Activated T-helper 2 cell treated with anti-CD3 and anti-CD28 coated beads, Interferon-gamma antibody, Interleukin-2, Interleukin-4, amounts not matched to agents 10 μg/mL and 5 μg/mL and 100 μg/mL, durations not matched to agents 14 hours and 24 hours and 36 hours (primary cell): ENCODE measurements at regions of chr10 and their contacts with region 1.

Region 1: DNA sequence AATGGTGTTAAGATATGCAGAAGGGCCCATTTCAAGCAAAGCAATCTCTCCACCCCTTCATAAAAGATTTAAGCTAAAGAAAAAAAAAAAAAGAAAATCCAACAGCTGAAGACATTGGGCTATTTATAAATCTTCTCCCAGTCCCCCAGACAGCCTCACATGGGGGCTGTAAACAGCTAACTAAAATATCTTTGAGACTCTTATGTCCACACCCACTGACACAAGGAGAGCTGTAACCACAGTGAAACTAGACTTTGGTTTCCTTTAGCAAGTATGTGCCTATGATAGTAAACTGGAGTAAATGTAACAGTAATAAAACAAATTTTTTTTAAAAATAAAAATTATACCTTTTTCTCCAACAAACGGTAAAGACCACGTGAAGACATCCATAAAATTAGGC is 28.6 kb downstream of the PPP3CB start:
- DNase-seq: no peak
- H3K4me3 Mint-ChIP-seq: no peak overlapping the region
- H3K27ac Mint-ChIP-seq: peak overlapping the region; percentile 28
- H3K4me1 Mint-ChIP-seq: peaks cover 24% of the 10 kb centered on the region
- H3K27me3 Mint-ChIP-seq: no peaks in the 10 kb centered on the region

Region 2: DNA sequence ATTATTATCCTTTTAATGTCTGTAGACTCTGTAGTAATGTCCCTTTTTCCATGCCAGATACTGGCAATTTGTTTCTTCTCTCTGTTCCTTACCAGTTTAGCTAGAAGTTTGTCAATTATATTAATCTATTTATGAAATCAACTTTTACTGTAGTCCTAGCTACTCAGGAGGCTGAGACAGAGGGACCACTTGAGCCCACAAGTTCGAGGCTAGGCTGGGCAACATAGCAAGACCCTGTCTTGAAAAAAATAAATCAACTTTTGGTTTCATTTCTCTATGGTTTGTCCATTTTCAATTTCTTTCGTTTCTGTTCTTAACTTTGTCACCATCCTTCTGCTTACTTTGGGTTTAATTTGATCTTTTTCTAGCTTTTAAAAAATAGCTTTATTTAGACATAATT is 470.1 kb before region 1 on chr10:
- intact Hi-C with region 1: no loop called
- DNase-seq: no peak
- H3K4me3 Mint-ChIP-seq: no peak overlapping the region
- H3K27ac Mint-ChIP-seq: no peak overlapping the region
- H3K4me1 Mint-ChIP-seq: peaks cover 1% of the 10 kb centered on the region
- H3K27me3 Mint-ChIP-seq: no peaks in the 10 kb centered on the region

Region 3: DNA sequence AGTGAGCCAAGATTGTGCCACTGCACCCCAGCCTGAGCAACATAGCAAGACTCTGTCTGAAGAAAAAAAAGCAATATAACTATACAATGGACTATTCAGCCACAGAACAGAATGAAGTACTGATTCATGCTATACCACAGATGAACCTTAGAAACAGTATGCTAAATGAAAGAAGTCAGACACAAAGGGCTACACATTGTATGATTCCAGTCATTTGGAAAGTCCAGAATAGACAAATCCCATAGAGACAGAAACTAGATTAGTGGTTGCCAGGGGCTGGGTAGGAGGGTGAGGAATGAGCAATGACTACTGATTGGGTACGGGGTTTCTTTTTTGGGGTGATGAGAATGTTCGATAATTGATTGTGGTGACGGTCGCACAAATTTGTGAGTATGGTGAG is 99.0 kb before region 1 on chr10:
- intact Hi-C with region 1: no loop called
- DNase-seq: no peak
- H3K4me3 Mint-ChIP-seq: no peak overlapping the region
- H3K27ac Mint-ChIP-seq: no peak overlapping the region
- H3K4me1 Mint-ChIP-seq: peaks cover 6% of the 10 kb centered on the region
- H3K27me3 Mint-ChIP-seq: no peaks in the 10 kb centered on the region

Region 4: GRCh38 chr10:73480158-73480557 is 13.0 kb after region 1 on chr10:
- intact Hi-C with region 1: loop called (anchors 1 kb)
- DNase-seq: no peak
- H3K4me3 Mint-ChIP-seq: peak overlapping the region; percentile 39
- H3K27ac Mint-ChIP-seq: peak overlapping the region; percentile 53
- H3K4me1 Mint-ChIP-seq: peaks cover 32% of the 10 kb centered on the region
- H3K27me3 Mint-ChIP-seq: no peaks in the 10 kb centered on the region

Region 5: GRCh38 chr10:73537288-73537687 is 70.1 kb after region 1 on chr10:
- intact Hi-C with region 1: no loop called
- DNase-seq: no peak
- H3K4me3 Mint-ChIP-seq: no peak overlapping the region
- H3K27ac Mint-ChIP-seq: no peak overlapping the region
- H3K4me1 Mint-ChIP-seq: peaks cover 19% of the 10 kb centered on the region
- H3K27me3 Mint-ChIP-seq: peaks cover 27% of the 10 kb centered on the region